ENCODE measurements at regions of chr20 and their contacts with region 1.

Region 1: GRCh38 chr20:47725248-47725973 is 59.9 kb downstream of the SULF2 start:
- DNase-seq: peak; percentile 27 to 86 (median 67)

Region 2: DNA sequence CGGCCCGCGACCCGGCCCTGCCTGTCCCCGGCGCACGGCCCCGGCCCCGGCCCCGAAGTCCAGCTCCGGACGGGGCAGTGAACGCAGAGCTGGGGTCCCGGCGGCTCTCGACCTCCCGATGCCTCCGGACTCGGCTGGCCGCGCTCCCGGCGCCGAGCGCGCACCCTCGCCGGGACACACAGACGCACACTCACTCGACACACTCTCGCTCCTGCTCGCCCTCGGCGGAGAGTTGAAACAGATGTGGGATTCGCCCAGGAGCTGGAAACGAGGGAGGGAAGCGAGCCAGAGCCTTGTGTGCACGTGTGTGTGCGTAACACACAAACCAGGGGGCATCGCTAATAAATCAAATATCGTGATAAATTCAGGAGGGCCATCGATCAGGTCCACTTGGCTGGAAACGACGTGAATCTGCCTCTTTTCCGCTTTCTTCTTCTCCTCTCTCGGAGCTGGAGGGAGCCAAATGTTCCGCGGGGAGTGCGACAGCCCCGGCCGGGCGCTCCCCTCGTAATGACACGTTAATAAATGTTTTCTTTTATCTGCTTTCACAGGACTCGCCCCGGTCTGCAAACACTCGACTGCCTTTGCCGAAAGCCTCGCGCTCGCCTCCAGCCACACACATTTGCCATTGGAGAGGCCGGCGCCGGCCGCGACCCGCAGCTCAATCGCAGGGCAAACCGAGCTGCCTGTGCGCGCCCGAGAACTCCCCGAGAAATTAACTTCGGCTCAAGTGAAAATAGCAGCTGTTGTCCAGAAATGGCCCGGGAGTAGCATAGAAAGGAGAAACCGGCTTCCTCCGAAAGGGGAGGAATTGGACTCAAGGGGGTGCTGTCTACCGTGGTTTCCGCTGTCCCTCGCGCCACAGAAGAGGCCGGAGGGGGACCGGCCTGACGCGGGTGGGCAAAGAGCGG is 60.7 kb after region 1 on chr20:
- intact Hi-C with region 1: loop called (anchors 2 kb)
- DNase-seq: peak; percentile 39 to 90 (median 70)